Dorsolateral prefrontal cortex (tissue), 120 donors: ENCODE measurements at regions of chr11 and their contacts with region 1.

Region 1: DNA sequence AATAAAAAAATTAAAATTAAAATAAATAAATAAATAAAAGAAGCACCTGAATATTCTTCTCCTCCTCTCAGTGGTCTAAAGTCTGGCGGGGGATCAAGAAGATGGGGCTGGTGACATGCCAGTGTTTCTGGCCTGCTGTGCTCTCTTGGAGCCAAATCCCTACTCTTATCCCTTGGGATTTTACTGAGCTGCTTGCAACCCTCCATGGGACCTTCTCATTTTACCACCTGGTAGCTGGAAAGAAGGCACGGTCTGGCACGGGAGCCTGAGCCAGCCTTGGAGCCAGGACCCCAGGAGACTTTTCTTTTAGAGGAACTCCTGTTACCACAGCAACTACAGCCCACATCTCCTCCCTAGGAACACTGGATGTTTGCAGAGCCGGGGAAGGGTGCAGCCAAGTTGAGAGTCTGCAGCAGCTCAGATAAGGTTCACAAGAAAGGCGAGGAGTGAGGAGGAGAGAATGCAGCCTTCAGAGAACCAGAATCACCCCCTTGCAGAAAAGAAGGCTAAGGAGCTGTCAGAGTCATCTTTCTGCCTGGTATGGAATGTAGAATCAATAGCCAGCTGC is 21.4 kb downstream of the CD6 start:
- DNase-seq: peak in 1 of 10 donors; percentile 38
- H3K4me3 ChIP-seq: no peak overlapping the region
- H3K27ac ChIP-seq: no peak overlapping the region
- H3K27me3 ChIP-seq: peaks cover 0 to 18% (median 0%) of the 10 kb centered on the region in 45 donors
- CTCF ChIP-seq: no peak

Region 2: GRCh38 chr11:60906132-60906972 is 86.6 kb before region 1 on chr11 and contains the start of gene PRPF19:
- intact Hi-C with region 1: no loop called
- DNase-seq: peak; percentile 91 to 97 (median 96)
- H3K4me3 ChIP-seq: peak within 1 kb of the TSS; percentile 57 to 100 (median 97)
- H3K27ac ChIP-seq: peak within 1 kb of the TSS; percentile 61 to 98 (median 91)
- H3K27me3 ChIP-seq: no peaks in the 10 kb centered on the region
- CTCF ChIP-seq: peak in 32 of 56 donors; percentile 3 to 60 (median 34)
- total RNA-seq, gene PRPF19: 80.9 to 227 (median 172) TPM

Region 3: GRCh38 chr11:60932605-60933356 is 60.1 kb before region 1 on chr11:
- intact Hi-C with region 1: loop called in 1 of 2 experiments (anchors 10 kb)
- DNase-seq: peak in 1 of 10 donors; percentile 32
- H3K4me3 ChIP-seq: no peak overlapping the region
- H3K27ac ChIP-seq: no peak overlapping the region
- H3K27me3 ChIP-seq: peaks cover 0 to 2% (median 0%) of the 10 kb centered on the region in 45 donors
- CTCF ChIP-seq: no peak

Region 4: DNA sequence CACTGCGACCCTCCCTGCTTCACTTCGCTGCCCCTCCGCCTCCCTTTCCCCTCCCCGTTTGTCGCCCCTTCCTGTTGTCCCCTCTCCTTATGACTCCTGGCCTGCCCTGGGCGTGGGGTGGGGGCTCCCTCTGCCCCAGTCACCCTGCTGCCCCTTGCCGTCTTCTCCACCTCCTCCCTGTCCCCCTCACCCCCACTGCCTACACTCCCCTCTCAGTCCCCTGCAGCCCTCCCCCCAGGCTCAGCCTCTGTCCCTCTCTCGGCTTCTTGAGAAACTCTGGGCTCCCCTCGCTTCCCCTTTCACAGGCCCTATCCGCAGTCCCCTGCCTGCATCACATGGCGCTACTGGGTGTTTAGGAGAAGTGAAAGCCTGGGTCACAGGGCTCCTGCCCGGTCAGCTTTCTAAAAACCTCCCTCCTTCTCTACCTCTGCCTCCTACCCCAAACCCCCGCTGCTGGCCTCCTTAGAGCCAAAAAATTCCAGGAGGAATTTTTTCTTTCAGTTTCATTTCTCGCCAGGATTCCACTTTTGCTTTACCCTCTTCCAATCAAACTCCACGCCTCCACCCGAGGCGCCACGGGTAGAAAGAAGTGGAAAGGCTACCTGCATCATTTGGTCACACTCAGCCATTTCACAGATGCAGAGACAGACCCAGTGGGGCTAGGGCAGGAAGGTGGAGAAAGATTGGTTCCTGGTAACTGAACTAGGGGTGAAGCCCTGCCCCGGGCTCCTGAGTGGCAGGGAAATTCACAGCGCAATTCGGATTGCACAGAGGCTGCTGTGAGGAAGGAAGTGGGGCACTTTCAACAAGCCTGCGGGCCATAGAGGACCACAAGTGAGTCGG is 40.8 kb before region 1 on chr11 and contains the start of gene SLC15A3:
- intact Hi-C with region 1: no loop called
- DNase-seq: peak in 3 of 10 donors; percentile 36 to 60 (median 50)
- H3K4me3 ChIP-seq: peak within 1 kb of the TSS in 56 of 59 donors; percentile 19 to 63 (median 40)
- H3K27ac ChIP-seq: peak within 1 kb of the TSS in 56 of 59 donors; percentile 11 to 91 (median 67)
- H3K27me3 ChIP-seq: peaks cover 0 to 41% (median 0%) of the 10 kb centered on the region in 45 donors
- CTCF ChIP-seq: no peak
- total RNA-seq, gene SLC15A3: 3.9 to 21.8 (median 9.7) TPM